HEK293T (cell line): ENCODE measurements at regions of chr17 and their contacts with region 1.

Region 1: DNA sequence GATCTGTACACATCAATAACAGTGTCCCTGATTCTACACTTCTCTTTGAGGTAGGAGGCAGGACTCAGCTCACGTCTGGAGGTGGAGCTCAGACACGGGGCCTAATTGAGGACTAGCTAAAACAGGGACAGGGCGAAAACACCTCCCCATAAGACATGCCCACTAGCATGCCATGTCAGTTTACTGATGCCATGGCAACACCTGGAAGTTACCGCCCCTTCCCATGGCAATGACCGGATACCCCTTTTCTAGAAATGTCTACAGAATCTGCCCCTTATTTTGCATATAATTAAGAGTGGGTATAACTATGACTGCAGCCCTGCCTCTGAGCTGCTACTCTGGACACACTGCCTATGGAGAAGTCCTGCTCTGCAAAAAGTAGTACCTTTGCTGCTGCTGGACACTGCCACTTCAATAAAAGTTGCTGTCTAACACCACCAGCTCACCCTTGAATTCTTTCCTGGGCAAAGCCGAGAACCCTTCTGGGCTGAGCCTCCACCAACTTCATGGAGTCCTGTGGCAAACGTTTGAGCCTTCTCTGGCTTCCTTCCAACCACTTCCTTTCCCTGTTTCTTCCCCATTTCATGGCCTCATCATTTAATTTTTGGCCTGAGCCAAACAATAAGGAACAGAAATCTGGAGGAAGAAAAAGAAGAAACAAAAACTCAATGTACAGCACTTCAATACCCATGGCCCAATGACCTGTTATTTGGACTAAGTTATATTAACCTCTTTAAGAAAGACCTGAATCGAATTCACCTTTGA is 21.0 kb downstream of the PHB1 start:
- DNase-seq: no peak

Region 2: DNA sequence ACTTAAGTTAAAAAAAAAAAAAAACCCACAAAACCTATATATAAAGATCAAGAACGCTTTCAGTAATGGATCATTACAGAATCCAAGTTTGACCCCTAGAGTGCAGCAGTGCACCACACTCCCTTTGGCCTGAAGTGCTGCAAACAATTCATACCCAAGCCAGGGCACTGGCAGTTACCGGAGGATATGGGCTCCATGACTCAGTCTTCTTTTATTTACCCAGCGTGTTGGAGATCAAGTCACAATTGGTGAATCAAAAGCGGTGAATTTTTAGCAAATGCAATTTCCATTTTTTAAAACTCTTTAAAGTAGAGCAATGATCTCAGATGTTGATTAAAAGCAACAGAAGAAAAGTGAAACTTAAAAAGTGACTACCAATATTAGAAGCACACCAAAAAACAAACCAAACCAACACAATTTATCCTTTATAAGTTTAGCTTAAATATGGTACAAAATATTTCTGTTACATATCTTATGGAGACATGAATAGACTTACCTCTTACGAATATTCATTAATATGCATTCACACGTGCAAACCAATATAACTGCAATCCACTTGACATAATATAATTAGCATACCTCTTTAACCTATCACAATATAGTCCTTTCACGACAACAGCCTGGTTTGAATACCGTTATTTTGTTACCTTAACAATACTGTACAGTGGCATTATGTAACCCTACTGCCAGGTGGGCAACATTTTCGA is 78.0 kb before region 1 on chr17:
- CTCF ChIA-PET with region 1: interaction called, 16 read pairs
- POLR2A ChIA-PET with region 1: no interaction called
- DNase-seq: peak; percentile 81

Region 3: DNA sequence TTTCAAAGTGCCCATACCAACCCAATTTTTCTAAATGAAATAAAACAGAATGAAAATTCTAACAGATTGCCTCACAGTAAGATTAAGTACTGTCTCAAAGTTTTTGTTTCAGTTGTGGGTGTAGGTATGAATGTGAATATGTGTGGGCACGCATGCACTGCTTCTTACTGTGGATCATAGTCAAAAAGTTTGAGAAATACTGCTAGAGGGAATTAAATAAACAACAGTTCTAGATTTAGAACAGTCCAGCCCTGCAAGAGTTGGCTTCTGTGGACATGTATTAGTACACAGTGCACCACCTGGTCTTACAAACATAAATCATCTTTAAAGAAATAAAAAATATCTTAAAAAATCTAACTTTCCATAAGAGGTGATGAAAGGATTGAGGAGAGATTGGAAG is 40.1 kb before region 1 on chr17:
- CTCF ChIA-PET with region 1: no interaction called
- POLR2A ChIA-PET with region 1: no interaction called
- DNase-seq: no peak

Region 4: GRCh38 chr17:49468811-49469385 is 75.2 kb after region 1 on chr17:
- CTCF ChIA-PET with region 1: no interaction called
- POLR2A ChIA-PET with region 1: no interaction called
- DNase-seq: no peak